ENCODE measurements at regions of chr13 and their contacts with region 1.

Region 1: GRCh38 chr13:113562085-113562749 is 22.3 kb upstream of the TFDP1 start:
- DNase-seq: peak; percentile 22
- H3K4me3 ChIP-seq: no peak overlapping the region
- H3K27ac ChIP-seq: no peak overlapping the region
- H3K4me1 ChIP-seq: no peaks in the 10 kb centered on the region
- H3K27me3 ChIP-seq: no peaks in the 10 kb centered on the region
- CTCF ChIP-seq: peak; percentile 71 to 80

Region 2: DNA sequence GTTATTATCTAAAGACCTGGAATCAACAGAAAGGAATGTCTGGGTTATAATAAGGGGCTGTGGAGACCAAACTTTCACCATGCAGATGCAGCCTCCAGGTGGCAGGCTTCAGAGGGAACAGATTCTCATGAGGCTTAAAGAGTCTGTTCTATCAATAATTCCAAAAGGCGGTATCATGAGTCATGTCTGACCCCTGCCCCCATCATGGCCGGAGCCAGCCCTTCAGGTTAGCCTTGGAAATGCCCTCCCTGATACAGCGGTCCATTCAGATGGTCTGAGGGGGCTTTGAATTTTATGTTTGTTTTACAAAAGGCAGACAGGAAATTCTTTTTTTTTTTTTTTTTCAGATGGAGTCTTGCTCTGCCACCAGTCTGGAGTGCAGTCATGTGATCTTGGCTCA is 286.8 kb before region 1 on chr13:
- CTCF ChIA-PET with region 1: no interaction called
- dilution Hi-C with region 1: no loop called
- in situ Hi-C with region 1: no loop called
- intact Hi-C with region 1: loop called (anchors 10 kb)
- DNase-seq: peak; percentile 51
- H3K4me3 ChIP-seq: no peak overlapping the region
- H3K27ac ChIP-seq: no peak overlapping the region
- H3K4me1 ChIP-seq: peaks cover 16% of the 10 kb centered on the region
- H3K27me3 ChIP-seq: no peaks in the 10 kb centered on the region
- CTCF ChIP-seq: peak; percentile 35 to 57

Region 3: DNA sequence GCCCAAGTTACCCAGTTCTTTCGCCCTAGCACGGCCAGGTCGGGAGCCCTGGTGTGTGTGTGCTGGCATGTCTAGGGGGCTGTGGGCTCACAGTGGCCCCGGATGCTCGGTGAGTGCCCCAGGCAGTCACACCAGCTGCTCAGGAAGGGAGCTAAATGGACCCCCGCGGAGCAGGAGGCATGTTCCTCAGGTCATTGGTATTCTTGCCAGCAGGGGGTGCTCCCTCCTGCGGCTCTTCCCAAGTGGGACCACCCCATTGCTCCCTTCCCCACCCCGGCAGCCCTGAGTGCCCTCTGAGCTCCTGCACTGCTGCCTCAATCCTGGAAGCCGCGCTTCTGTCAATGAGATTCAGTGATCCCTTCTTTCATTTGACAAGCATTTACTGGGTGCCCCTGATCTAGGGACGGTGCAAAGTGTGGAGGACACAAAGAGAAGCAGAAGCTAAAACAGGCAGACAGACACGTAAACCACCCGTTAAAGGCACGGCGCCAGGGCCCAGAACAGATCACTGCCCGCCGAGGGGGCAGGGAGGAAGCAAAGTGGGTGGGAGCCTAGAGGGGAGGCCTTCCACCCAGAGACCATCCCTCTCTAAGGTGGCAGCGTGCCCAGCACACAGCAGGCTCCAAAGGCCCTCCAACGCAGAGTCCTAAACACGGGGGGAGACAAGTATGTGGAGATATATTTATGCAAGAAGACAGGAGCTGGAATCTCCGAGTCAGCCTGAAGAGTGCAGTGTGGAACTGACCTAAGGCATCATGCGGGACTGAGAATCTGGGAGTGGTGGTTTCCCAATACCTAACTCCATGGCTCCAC is 103.8 kb before region 1 on chr13:
- CTCF ChIA-PET with region 1: no interaction called
- dilution Hi-C with region 1: no loop called
- in situ Hi-C with region 1: no loop called
- intact Hi-C with region 1: loop called (anchors 1 kb)
- DNase-seq: no peak
- H3K4me3 ChIP-seq: no peak overlapping the region
- H3K27ac ChIP-seq: no peak overlapping the region
- H3K4me1 ChIP-seq: no peaks in the 10 kb centered on the region
- H3K27me3 ChIP-seq: no peaks in the 10 kb centered on the region
- CTCF ChIP-seq: peak; percentile 13 to 41

Region 4: GRCh38 chr13:113509989-113510388 is 52.2 kb before region 1 on chr13:
- CTCF ChIA-PET with region 1: no interaction called
- dilution Hi-C with region 1: loop called (anchors 5 kb)
- in situ Hi-C with region 1: no loop called
- intact Hi-C with region 1: no loop called
- DNase-seq: no peak
- H3K4me3 ChIP-seq: no peak overlapping the region
- H3K27ac ChIP-seq: no peak overlapping the region
- H3K4me1 ChIP-seq: no peaks in the 10 kb centered on the region
- H3K27me3 ChIP-seq: no peaks in the 10 kb centered on the region
- CTCF ChIP-seq: no peak

Region 5: DNA sequence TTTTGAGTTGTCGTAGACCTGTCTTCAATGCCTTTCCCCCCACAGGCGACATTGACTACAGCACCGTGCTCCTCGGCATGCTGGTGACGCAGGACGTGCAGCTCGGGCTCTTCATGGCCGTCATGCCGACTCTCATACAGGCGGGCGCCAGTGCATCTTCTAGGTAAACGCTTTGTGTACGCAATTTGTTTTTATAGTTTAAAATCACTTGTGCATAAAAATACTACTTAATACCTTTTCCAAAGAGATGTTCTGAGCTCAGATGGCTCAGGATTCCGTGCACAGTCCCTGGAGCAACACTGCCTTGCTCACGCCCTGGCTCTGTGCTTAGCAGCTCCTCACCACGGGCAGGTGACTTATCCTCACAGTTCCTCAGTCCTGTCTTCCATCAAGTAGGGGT is 41.6 kb before region 1 on chr13:
- CTCF ChIA-PET with region 1: no interaction called
- dilution Hi-C with region 1: no loop called
- in situ Hi-C with region 1: no loop called
- intact Hi-C with region 1: no loop called
- DNase-seq: no peak
- H3K4me3 ChIP-seq: no peak overlapping the region
- H3K27ac ChIP-seq: no peak overlapping the region
- H3K4me1 ChIP-seq: no peaks in the 10 kb centered on the region
- H3K27me3 ChIP-seq: no peaks in the 10 kb centered on the region
- CTCF ChIP-seq: no peak

Measured in mammary epithelial cell (primary cell).